CD8-positive, alpha-beta memory T cell (primary cell): ENCODE measurements at regions of chr13 and their contacts with region 1.

Region 1: GRCh38 chr13:41652727-41653361 is 195.5 kb downstream of the RGCC start:
- DNase-seq: peak in 4 of 5 donors; percentile 2 to 51 (median 26)
- H3K4me3 ChIP-seq: no peak overlapping the region
- H3K4me3 Mint-ChIP-seq: no peak overlapping the region
- H3K27ac ChIP-seq: no peak overlapping the region
- H3K27ac Mint-ChIP-seq: no peak overlapping the region
- H3K4me1 ChIP-seq: no peaks in the 10 kb centered on the region
- H3K4me1 Mint-ChIP-seq: peaks cover 0 to 5% (median 3%) of the 10 kb centered on the region in 3 donors
- H3K27me3 ChIP-seq: no peaks in the 10 kb centered on the region
- H3K27me3 Mint-ChIP-seq: no peaks in the 10 kb centered on the region

Region 2: DNA sequence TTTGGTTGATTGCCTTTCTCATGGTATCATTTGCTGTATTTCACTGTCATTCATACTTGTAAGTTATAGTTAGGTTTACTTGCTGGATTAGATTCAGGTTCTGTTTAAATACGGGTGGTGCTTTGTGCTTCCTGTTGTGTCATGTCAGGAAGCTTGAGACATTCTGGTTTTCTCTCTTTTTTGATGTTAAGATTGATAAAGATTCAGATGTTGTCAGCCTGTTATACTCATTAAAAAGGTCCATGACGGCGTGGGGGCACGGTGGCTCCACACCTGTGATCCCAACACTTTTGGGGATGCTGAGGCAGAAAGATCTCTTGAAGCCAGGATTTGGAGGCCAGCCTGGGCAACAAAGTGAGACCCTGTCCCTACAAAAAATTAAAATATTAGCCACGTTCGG is 296.1 kb before region 1 on chr13:
- CTCF ChIA-PET with region 1: interaction called, 11 read pairs
- POLR2A ChIA-PET with region 1: no interaction called
- DNase-seq: peak in 3 of 5 donors; percentile 34 to 68 (median 55)
- H3K4me3 ChIP-seq: peak overlapping the region; percentile 35
- H3K4me3 Mint-ChIP-seq: peak overlapping the region; percentile 42 to 90 (median 70)
- H3K27ac ChIP-seq: peak overlapping the region; percentile 41
- H3K27ac Mint-ChIP-seq: peak overlapping the region; percentile 90 to 100 (median 93)
- H3K4me1 ChIP-seq: peaks cover 69% of the 10 kb centered on the region
- H3K4me1 Mint-ChIP-seq: peaks cover 60 to 83% (median 74%) of the 10 kb centered on the region in 3 donors
- H3K27me3 ChIP-seq: no peaks in the 10 kb centered on the region
- H3K27me3 Mint-ChIP-seq: peaks cover 0 to 2% of the 10 kb centered on the region in 2 donors

Region 3: GRCh38 chr13:41411522-41411921 is 241.3 kb before region 1 on chr13:
- CTCF ChIA-PET with region 1: interaction called, 10 read pairs
- POLR2A ChIA-PET with region 1: no interaction called
- DNase-seq: peak in 2 of 5 donors; percentile 22 to 23
- H3K4me3 ChIP-seq: no peak overlapping the region
- H3K4me3 Mint-ChIP-seq: no peak overlapping the region
- H3K27ac ChIP-seq: no peak overlapping the region
- H3K27ac Mint-ChIP-seq: peak overlapping the region in 2 of 8 donors; percentile 72 to 82
- H3K4me1 ChIP-seq: no peaks in the 10 kb centered on the region
- H3K4me1 Mint-ChIP-seq: no peaks in the 10 kb centered on the region
- H3K27me3 ChIP-seq: no peaks in the 10 kb centered on the region
- H3K27me3 Mint-ChIP-seq: no peaks in the 10 kb centered on the region

Region 4: GRCh38 chr13:41456768-41457588 is 195.9 kb before region 1 on chr13 and contains the start of gene RGCC:
- CTCF ChIA-PET with region 1: interaction called, 15 read pairs
- POLR2A ChIA-PET with region 1: no interaction called
- DNase-seq: peak; percentile 89 to 98 (median 96)
- H3K4me3 ChIP-seq: peak within 1 kb of the TSS; percentile 95
- H3K4me3 Mint-ChIP-seq: peak within 1 kb of the TSS; percentile 85 to 98 (median 91)
- H3K27ac ChIP-seq: peak within 1 kb of the TSS; percentile 86
- H3K27ac Mint-ChIP-seq: peak within 1 kb of the TSS; percentile 89 to 99 (median 94)
- H3K4me1 ChIP-seq: peaks cover 37% of the 10 kb centered on the region
- H3K4me1 Mint-ChIP-seq: peaks cover 39 to 50% (median 48%) of the 10 kb centered on the region in 3 donors
- H3K27me3 ChIP-seq: no peaks in the 10 kb centered on the region
- H3K27me3 Mint-ChIP-seq: peaks cover 0 to 3% of the 10 kb centered on the region in 2 donors
- total RNA-seq, gene RGCC: 107 to 110 TPM

Region 5: DNA sequence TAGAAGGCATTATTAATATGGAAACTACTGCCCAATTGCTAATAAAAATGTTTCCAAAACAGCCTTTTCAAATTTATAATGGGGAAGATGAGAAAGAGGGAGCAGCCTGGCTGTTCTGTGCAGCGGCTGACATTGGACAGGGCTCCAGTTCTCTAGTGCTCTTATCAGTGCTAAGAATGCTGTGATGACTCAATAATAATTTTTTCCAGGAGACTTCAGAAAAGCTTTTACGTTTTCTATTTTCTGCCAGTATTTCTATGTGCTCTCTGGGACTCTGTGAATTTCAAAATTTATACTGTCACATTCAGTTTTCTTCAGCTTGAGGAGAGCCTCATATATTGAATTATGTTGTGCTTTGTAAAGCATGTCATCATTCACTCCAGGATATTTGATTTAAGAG is 98.4 kb after region 1 on chr13:
- CTCF ChIA-PET with region 1: no interaction called
- POLR2A ChIA-PET with region 1: no interaction called
- DNase-seq: no peak
- H3K4me3 ChIP-seq: no peak overlapping the region
- H3K4me3 Mint-ChIP-seq: no peak overlapping the region
- H3K27ac ChIP-seq: no peak overlapping the region
- H3K27ac Mint-ChIP-seq: no peak overlapping the region
- H3K4me1 ChIP-seq: no peaks in the 10 kb centered on the region
- H3K4me1 Mint-ChIP-seq: no peaks in the 10 kb centered on the region
- H3K27me3 ChIP-seq: no peaks in the 10 kb centered on the region
- H3K27me3 Mint-ChIP-seq: no peaks in the 10 kb centered on the region